Activated naive CD8-positive, alpha-beta T cell treated with anti-CD3 and anti-CD28 coated beads, Interleukin-2, amount 10 ng/mL, durations not matched to agents 7 days and 5 days (primary cell): ENCODE measurements at regions of chr7 and their contacts with region 1.

Region 1: DNA sequence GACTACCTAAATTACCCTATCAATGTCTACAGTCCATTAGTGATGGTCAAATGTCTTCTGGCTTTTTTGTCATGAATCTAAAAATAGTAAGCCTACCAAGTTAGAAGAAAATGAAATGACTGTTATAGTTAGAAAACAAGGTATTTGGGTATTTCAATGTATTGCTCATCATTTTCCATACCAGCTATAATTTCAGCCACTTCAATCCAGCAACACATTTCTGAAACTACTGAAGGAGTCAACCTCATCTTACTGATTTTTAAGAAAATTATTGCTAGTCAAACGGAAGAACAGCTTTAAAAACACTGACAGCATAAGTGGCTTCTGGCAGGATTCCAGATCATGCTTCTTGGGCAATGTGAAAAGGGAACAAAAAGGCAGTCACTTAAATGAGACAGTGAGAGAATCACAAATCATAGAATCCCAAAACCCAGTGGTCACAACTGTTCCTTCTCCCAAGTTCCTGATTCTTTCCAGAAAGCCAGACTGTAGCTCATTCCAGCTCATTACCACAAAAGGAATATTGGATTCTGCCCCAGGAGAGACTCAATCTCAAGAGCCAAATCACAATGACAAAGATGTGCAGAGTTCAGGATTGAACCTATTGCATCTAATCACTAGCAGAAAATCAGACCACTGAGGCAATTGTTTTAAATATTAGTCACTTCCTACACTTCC is 61.2 kb upstream of the LRRN3 start:
- DNase-seq: no peak
- ATAC-seq: no peak
- H3K4me3 Mint-ChIP-seq: peak overlapping the region; percentile 35
- H3K27ac Mint-ChIP-seq: peak overlapping the region; percentile 77
- H3K4me1 Mint-ChIP-seq: peaks cover 49% of the 10 kb centered on the region
- H3K27me3 Mint-ChIP-seq: no peaks in the 10 kb centered on the region

Region 2: DNA sequence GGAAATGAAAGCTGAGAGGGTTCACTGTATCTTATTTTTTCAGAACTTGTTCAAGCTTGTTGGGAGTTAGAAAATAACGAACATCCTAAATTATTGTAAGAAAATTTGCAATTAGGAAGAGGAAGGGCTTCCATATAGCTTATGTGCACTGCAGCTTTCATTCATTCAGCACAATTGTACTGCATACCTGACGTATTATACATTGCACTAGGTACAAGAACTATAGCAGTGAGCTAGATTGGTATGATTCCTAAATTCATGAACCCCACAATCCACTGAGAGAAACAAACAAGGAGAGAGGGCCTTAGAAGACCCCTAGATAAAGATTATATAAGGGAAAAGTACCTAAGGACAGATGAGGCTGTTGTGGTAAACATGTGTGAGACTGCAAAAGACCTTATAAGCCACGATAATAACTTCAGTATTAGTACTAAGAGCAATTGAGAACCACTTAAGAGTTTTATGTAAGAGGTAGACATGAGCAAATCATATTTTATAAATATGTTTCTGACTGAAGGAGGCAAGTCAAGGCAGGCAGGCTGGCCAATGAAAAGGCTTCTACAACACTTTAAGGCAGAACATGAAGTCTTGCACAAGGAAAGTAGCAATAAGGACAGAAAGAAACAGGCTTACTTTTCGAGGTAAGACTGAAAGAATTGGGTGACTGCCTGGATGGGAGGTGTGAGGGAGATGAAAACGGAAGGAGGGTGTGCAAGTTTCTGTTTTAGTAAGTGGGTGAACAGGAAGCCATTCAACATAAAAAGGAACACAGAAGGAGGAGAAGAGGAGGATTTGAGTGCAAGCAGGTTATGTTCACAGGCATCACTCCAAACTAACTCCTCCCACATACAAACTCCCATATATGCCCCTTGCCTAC is 16.7 kb before region 1 on chr7:
- POLR2A ChIA-PET with region 1: interaction called, 11 read pairs
- DNase-seq: no peak
- ATAC-seq: peak; percentile 90
- H3K4me3 Mint-ChIP-seq: peak overlapping the region; percentile 85
- H3K27ac Mint-ChIP-seq: peak overlapping the region; percentile 95
- H3K4me1 Mint-ChIP-seq: peaks cover 67% of the 10 kb centered on the region
- H3K27me3 Mint-ChIP-seq: no peaks in the 10 kb centered on the region

Region 3: GRCh38 chr7:111067251-111067650 is 37.5 kb after region 1 on chr7:
- POLR2A ChIA-PET with region 1: no interaction called
- DNase-seq: no peak
- ATAC-seq: no peak
- H3K4me3 Mint-ChIP-seq: no peak overlapping the region
- H3K27ac Mint-ChIP-seq: no peak overlapping the region
- H3K4me1 Mint-ChIP-seq: peaks cover 20% of the 10 kb centered on the region
- H3K27me3 Mint-ChIP-seq: no peaks in the 10 kb centered on the region